ENCODE measurements at regions of chr4 and their contacts with region 1.

Region 1: DNA sequence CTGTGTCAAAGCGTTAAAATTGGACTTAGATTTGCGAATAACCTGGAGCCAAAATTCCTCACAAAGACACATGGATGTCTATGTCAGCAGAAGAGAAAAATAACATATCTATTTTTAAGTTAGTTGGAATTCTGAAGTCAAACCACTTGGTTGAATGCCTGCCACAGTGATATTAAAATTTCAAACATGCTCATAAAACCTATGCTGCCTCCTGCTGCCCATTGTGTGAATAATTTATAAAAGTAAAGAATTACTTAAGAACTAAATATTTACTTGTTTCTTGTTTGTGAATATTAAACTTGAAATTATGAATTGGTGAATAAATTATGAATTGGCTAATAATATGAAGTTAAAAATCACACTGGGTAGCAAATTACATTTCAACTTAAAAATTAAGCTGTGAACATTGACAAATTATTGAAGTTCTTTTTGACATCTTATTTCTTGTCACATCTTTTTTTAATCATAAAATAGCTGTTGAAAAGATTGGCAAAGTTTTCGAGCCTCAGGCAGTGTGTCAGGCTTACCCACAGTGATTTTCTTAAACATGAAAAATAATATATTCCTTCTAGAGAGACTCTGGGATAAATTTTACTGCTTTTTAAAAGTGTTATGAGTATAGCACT is 35.4 kb downstream of the FABP2 start:
- DNase-seq: peak in 1 of 2 donors; percentile 81
- H3K4me3 ChIP-seq: no peak overlapping the region
- H3K27ac ChIP-seq: no peak overlapping the region
- H3K4me1 ChIP-seq: peaks cover 11 to 46% (median 30%) of the 10 kb centered on the region in 4 donors
- H3K27me3 ChIP-seq: no peaks in the 10 kb centered on the region
- CTCF ChIP-seq: peak in 5 of 7 experiments; percentile 20 to 60 (median 46)
- EP300 ChIP-seq: no peak
- POLR2A ChIP-seq: no peak

Region 2: DNA sequence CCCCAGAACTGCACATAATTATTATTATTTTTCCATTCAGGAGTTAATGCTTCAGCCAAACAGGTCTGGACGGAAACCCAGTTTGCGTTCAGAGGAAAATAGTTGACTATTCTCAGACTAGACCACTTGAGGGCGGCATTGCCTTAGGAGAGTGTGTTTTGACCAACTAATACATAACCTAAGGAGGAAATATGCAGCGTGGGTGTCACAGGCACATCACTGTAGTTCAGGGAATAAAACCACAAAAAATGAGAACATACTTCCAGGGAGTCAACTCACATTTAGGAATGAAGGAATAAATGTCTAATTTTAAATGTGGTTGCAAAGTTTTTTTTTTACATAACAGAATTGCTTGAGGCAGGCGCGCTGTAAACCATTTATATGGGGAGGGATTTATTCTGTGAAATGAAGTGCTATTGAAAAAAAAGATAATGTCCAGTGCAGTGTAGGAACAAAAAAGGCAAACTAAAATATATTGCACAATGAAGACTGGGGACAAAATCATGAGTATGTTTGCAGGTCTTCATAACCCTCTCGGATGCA is 304.6 kb before region 1 on chr4:
- intact Hi-C with region 1: loop called (anchors 10 kb)
- DNase-seq: peak; percentile 61 to 89
- H3K4me3 ChIP-seq: no peak overlapping the region
- H3K27ac ChIP-seq: peak overlapping the region in 4 of 5 donors; percentile 27 to 89 (median 63)
- H3K4me1 ChIP-seq: peaks cover 0 to 46% (median 18%) of the 10 kb centered on the region in 4 donors
- H3K27me3 ChIP-seq: no peaks in the 10 kb centered on the region
- CTCF ChIP-seq: peak in 5 of 7 experiments; percentile 51 to 78 (median 64)
- EP300 ChIP-seq: no peak
- POLR2A ChIP-seq: no peak

Region 3: GRCh38 chr4:119038116-119038841 is 248.2 kb before region 1 on chr4:
- intact Hi-C with region 1: loop called (anchors 10 kb)
- DNase-seq: no peak
- H3K4me3 ChIP-seq: no peak overlapping the region
- H3K27ac ChIP-seq: peak overlapping the region in 4 of 5 donors; percentile 65 to 93 (median 84)
- H3K4me1 ChIP-seq: peaks cover 8 to 54% (median 40%) of the 10 kb centered on the region in 4 donors
- H3K27me3 ChIP-seq: no peaks in the 10 kb centered on the region
- CTCF ChIP-seq: no peak
- EP300 ChIP-seq: no peak
- POLR2A ChIP-seq: no peak

Region 4: DNA sequence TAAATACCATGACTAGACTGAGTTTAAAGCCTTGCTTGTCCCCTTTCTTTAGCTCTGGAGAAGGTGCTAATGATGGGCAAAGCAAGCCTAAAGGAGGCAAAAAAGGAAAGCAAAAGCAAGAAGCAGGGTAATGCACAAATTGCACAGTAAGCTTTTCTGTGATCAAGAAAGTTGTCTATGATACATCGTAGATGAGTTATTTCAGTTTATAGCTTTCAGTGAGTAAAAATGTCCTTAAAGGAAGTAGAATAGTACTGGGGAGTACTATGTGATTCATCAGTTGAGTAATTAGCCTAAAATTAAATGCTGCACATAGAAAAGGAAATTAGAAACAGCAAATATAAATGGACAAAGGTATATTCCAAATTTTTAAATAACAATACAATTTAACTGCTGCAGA is 392.3 kb after region 1 on chr4:
- intact Hi-C with region 1: no loop called
- DNase-seq: no peak
- H3K4me3 ChIP-seq: no peak overlapping the region
- H3K27ac ChIP-seq: no peak overlapping the region
- H3K4me1 ChIP-seq: peaks cover 0 to 21% (median 9%) of the 10 kb centered on the region in 4 donors
- H3K27me3 ChIP-seq: no peaks in the 10 kb centered on the region
- CTCF ChIP-seq: no peak
- EP300 ChIP-seq: no peak
- POLR2A ChIP-seq: no peak